Activated naive CD4-positive, alpha-beta T cell treated with anti-CD3 and anti-CD28 coated beads for 36 hours (primary cell): ENCODE measurements at regions of chr12 and their contacts with region 1.

Region 1: DNA sequence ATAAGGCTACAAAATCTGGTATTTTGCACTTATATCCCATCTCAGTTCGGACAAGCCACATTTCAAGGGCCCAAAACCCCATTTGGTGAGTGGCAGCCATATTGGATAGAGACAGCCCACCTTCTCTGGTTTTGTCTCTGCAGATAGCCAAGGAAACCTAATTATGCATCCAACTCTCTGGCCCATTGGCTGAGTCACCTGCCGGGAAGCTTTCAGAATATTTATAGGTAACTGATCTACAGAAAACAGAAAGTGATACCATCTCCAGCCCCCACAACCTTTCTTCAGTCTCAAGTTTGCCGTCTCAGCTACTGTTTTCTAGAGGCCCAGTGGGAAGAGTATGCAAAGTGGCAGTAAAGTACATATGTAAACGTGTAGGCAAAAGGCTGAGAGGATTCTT is 33.7 kb upstream of the PPP1CC start:
- DNase-seq: peak; percentile 85
- H3K4me3 Mint-ChIP-seq: peak overlapping the region; percentile 60
- H3K27ac Mint-ChIP-seq: peak overlapping the region; percentile 94
- H3K4me1 Mint-ChIP-seq: peaks cover 77% of the 10 kb centered on the region
- H3K27me3 Mint-ChIP-seq: no peaks in the 10 kb centered on the region

Region 2: GRCh38 chr12:109995686-109996482 is 780.5 kb before region 1 on chr12 and contains the start of gene GIT2:
- CTCF ChIA-PET with region 1: no interaction called
- intact Hi-C with region 1: loop called (anchors 10 kb)
- DNase-seq: peak; percentile 96
- H3K4me3 Mint-ChIP-seq: peak within 1 kb of the TSS; percentile 94
- H3K27ac Mint-ChIP-seq: peak within 1 kb of the TSS; percentile 93
- H3K4me1 Mint-ChIP-seq: peaks cover 54% of the 10 kb centered on the region
- H3K27me3 Mint-ChIP-seq: no peaks in the 10 kb centered on the region
- total RNA-seq, gene GIT2: 40.2 to 41.6 TPM

Region 3: GRCh38 chr12:110501752-110502738 is 274.4 kb before region 1 on chr12 and contains the starts of genes RAD9B and VPS29:
- CTCF ChIA-PET with region 1: no interaction called
- intact Hi-C with region 1: loop called (anchors 2 kb)
- DNase-seq: peak; percentile 100
- H3K4me3 Mint-ChIP-seq: peak within 1 kb of the TSS; percentile 94
- H3K27ac Mint-ChIP-seq: peak within 1 kb of the TSS; percentile 96
- H3K4me1 Mint-ChIP-seq: peaks cover 32% of the 10 kb centered on the region
- H3K27me3 Mint-ChIP-seq: no peaks in the 10 kb centered on the region
- total RNA-seq, gene RAD9B: 1.1 to 1.5 TPM
- total RNA-seq, gene VPS29: 76.6 to 81.8 TPM

Region 4: DNA sequence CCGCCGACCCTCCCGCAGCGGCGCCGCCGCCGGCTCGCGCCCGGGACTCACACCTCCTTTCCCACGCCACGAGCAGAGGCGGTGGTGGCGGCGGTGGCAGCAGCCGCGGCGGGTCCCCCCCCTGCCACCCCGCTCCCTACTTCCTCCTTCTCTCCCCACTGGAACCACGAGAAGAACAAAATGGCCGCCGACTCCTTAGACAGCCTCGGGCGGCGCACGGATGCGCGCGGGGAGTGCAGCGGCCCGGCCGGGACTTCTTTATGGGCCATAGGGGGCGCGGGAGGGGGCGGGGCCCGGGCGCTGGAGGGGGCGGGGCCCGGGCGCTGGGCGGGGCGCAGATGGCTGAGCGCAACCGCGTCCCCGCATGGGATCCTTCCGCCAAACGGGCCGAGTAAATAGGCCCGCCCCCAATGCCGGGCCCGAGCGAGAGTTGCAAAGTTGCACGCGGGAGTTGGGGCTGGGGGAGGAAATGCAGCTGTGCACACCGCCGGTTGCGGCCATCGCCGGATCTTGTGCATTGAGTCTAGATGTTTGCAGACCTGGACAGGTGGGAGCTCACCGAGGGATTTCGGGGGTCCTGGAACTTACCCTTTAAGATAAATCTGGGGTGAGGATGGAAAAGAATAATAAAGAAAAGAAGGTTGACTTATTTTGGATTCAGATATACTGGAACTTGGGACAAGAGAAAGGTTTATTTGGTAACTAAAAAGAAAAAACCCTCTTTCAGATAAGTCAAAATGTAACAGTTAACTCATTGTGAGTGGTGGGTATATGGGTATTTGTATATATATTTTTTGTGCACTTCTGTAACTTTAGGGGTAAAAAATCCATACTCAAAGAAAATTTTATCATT is 33.5 kb before region 1 on chr12 and contains the start of gene PPP1CC:
- CTCF ChIA-PET with region 1: interaction called, 5 read pairs
- intact Hi-C with region 1: loop called (anchors 1 kb)
- DNase-seq: peak; percentile 93
- H3K4me3 Mint-ChIP-seq: peak within 1 kb of the TSS; percentile 99
- H3K27ac Mint-ChIP-seq: peak within 1 kb of the TSS; percentile 98
- H3K4me1 Mint-ChIP-seq: peaks cover 37% of the 10 kb centered on the region
- H3K27me3 Mint-ChIP-seq: no peaks in the 10 kb centered on the region
- total RNA-seq, gene PPP1CC: 280 to 285 TPM

Region 5: DNA sequence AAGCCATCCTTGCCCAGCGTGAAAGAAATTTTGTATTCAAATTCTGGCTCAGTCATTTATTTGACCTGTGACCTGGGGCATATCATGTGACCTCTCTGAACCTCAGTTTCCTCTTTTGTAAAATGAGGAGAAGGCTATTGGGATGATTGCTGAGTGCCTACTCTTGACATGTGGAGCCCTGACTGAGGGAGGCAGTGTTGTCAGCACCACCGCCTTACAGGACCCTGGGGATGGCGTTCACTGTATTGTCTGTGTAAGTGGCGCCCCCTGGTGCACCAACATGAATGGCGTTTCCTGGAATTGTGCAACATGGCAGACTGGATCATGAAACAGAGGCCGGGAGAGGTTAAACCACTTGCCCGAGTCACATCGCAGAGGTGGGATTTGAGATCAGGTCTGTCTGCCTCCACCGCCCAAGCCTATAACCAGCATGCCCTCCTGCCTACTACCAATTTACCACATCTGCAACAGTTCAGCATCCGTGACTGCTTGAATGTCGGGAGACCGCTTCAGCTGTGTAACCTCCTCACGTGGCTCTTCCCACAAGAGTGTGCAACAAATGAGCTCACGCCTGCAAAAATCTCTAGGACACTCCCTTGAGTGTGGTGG is 50.3 kb after region 1 on chr12:
- CTCF ChIA-PET with region 1: interaction called, 7 read pairs
- intact Hi-C with region 1: loop called (anchors 1 kb)
- DNase-seq: peak; percentile 97
- H3K4me3 Mint-ChIP-seq: peak overlapping the region; percentile 7
- H3K27ac Mint-ChIP-seq: peak overlapping the region; percentile 50
- H3K4me1 Mint-ChIP-seq: peaks cover 15% of the 10 kb centered on the region
- H3K27me3 Mint-ChIP-seq: no peaks in the 10 kb centered on the region

Region 6: GRCh38 chr12:111056618-111057521 is 280.5 kb after region 1 on chr12:
- CTCF ChIA-PET with region 1: no interaction called
- intact Hi-C with region 1: loop called (anchors 5 kb)
- DNase-seq: peak; percentile 88
- H3K4me3 Mint-ChIP-seq: no peak overlapping the region
- H3K27ac Mint-ChIP-seq: peak overlapping the region; percentile 97
- H3K4me1 Mint-ChIP-seq: peaks cover 28% of the 10 kb centered on the region
- H3K27me3 Mint-ChIP-seq: no peaks in the 10 kb centered on the region

Region 7: GRCh38 chr12:111434680-111435338 is 658.4 kb after region 1 on chr12:
- CTCF ChIA-PET with region 1: no interaction called
- intact Hi-C with region 1: loop called (anchors 5 kb)
- DNase-seq: peak; percentile 89
- H3K4me3 Mint-ChIP-seq: peak overlapping the region; percentile 56
- H3K27ac Mint-ChIP-seq: peak overlapping the region; percentile 92
- H3K4me1 Mint-ChIP-seq: peaks cover 91% of the 10 kb centered on the region
- H3K27me3 Mint-ChIP-seq: no peaks in the 10 kb centered on the region